ENCODE measurements at regions of chr5 and their contacts with region 1.

Region 1: GRCh38 chr5:17216176-17216973 is 1.1 kb upstream of the BASP1 start:
- DNase-seq: peak in 1 of 2 donors; percentile 92
- H3K4me3 ChIP-seq: peak overlapping the region; percentile 63 to 68
- H3K27ac ChIP-seq: peak overlapping the region; percentile 77
- H3K4me1 ChIP-seq: peaks cover 16% of the 10 kb centered on the region
- H3K27me3 ChIP-seq: no peaks in the 10 kb centered on the region
- CTCF ChIP-seq: peak; percentile 28 to 83 (median 65)
- POLR2A ChIP-seq: no peak

Region 2: GRCh38 chr5:17069995-17070511 is 146.3 kb before region 1 on chr5:
- intact Hi-C with region 1: no loop called
- DNase-seq: no peak
- H3K4me3 ChIP-seq: no peak overlapping the region
- H3K27ac ChIP-seq: no peak overlapping the region
- H3K4me1 ChIP-seq: peaks cover 8% of the 10 kb centered on the region
- H3K27me3 ChIP-seq: no peaks in the 10 kb centered on the region
- CTCF ChIP-seq: no peak
- POLR2A ChIP-seq: no peak

Region 3: GRCh38 chr5:17157916-17158529 is 58.4 kb before region 1 on chr5:
- intact Hi-C with region 1: no loop called
- DNase-seq: no peak
- H3K4me3 ChIP-seq: no peak overlapping the region
- H3K27ac ChIP-seq: no peak overlapping the region
- H3K4me1 ChIP-seq: no peaks in the 10 kb centered on the region
- H3K27me3 ChIP-seq: no peaks in the 10 kb centered on the region
- CTCF ChIP-seq: no peak
- POLR2A ChIP-seq: no peak

Region 4: GRCh38 chr5:18305297-18305924 is 1089.0 kb after region 1 on chr5:
- intact Hi-C with region 1: loop called (anchors 5 kb)
- DNase-seq: no peak
- H3K4me3 ChIP-seq: no peak overlapping the region
- H3K27ac ChIP-seq: no peak overlapping the region
- H3K4me1 ChIP-seq: no peaks in the 10 kb centered on the region
- H3K27me3 ChIP-seq: no peaks in the 10 kb centered on the region
- CTCF ChIP-seq: peak in 2 of 3 experiments; percentile 18 to 50
- POLR2A ChIP-seq: no peak

Measured in vagina (tissue), 2 donors.